ENCODE measurements at regions of chr2 and their contacts with region 1.

Region 1: DNA sequence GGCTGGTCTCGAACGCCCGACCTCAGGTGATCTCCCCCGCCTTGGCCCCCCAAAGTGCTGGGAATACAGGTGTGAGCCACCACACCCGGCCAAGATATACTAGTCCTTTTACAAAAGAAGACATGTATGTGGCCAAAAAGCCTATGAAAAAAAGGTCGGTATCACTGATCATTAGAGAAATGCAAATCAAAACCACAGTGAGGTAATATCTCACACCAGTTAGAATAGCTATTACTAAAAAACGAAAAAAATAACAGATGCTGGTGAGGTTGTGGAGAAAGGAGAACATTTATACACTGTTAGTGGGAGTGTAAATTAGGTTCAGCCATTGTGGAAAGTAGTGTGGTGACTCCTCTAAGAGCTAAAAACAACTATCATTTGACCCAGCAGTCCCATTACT is 26.4 kb downstream of the KLHL23 start:
- DNase-seq: no peak
- ATAC-seq: no peak
- H3K4me3 ChIP-seq: no peak overlapping the region
- H3K4me3 Mint-ChIP-seq: no peak overlapping the region
- H3K27ac ChIP-seq: no peak overlapping the region
- H3K27ac Mint-ChIP-seq: no peak overlapping the region
- H3K4me1 ChIP-seq: no peaks in the 10 kb centered on the region
- H3K4me1 Mint-ChIP-seq: peaks cover 7% of the 10 kb centered on the region
- H3K27me3 ChIP-seq: no peaks in the 10 kb centered on the region
- H3K27me3 Mint-ChIP-seq: no peaks in the 10 kb centered on the region
- CTCF ChIP-seq: no peak

Region 2: DNA sequence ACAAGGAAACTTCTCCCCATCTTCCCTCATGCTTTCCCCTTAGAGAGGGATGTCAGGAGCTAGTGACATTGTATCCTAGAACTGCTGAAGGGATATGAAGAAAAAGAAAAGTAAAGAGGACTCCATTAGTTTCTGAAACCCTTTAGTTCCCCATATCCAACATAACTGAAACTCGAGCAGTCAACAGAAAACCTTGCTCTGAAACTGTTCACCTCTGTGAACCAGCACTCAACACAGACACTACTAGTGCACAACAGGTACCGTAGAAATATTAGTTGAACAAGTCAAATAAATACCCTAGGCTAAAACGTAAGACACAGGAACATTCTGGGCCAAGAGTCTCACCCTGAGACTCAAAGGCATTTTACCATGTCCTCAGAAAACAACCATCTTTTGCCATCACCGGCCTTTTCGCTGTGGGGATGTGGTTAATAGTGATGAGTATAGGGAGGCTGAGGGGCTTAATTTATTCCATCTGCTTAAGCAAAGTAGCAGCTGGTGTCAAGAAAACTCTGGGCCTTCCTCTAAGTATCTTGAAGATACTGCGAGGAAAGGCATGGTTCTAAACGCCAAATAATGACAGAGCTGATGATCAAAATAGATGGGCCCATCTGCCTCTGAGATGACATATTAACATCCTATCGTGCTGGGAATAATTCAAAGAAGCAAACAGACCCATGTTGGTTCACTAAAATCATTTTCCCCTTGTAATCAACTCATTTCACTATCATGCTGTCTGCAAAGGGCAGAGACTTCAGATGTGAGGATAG is 1669.4 kb before region 1 on chr2:
- CTCF ChIA-PET with region 1: no interaction called
- POLR2A ChIA-PET with region 1: no interaction called
- intact Hi-C with region 1: loop called in 1 of 2 experiments (anchors 10 kb)
- DNase-seq: no peak
- ATAC-seq: no peak
- H3K4me3 ChIP-seq: no peak overlapping the region
- H3K4me3 Mint-ChIP-seq: no peak overlapping the region
- H3K27ac ChIP-seq: no peak overlapping the region
- H3K27ac Mint-ChIP-seq: no peak overlapping the region
- H3K4me1 ChIP-seq: peaks cover 12% of the 10 kb centered on the region
- H3K4me1 Mint-ChIP-seq: peaks cover 31% of the 10 kb centered on the region
- H3K27me3 ChIP-seq: no peaks in the 10 kb centered on the region
- H3K27me3 Mint-ChIP-seq: no peaks in the 10 kb centered on the region
- CTCF ChIP-seq: no peak

Region 3: GRCh38 chr2:168816369-168816768 is 943.6 kb before region 1 on chr2:
- CTCF ChIA-PET with region 1: no interaction called
- POLR2A ChIA-PET with region 1: no interaction called
- intact Hi-C with region 1: no loop called
- DNase-seq: no peak
- ATAC-seq: no peak
- H3K4me3 ChIP-seq: no peak overlapping the region
- H3K4me3 Mint-ChIP-seq: no peak overlapping the region
- H3K27ac ChIP-seq: no peak overlapping the region
- H3K27ac Mint-ChIP-seq: no peak overlapping the region
- H3K4me1 ChIP-seq: no peaks in the 10 kb centered on the region
- H3K4me1 Mint-ChIP-seq: no peaks in the 10 kb centered on the region
- H3K27me3 ChIP-seq: no peaks in the 10 kb centered on the region
- H3K27me3 Mint-ChIP-seq: no peaks in the 10 kb centered on the region
- CTCF ChIP-seq: no peak

Region 4: DNA sequence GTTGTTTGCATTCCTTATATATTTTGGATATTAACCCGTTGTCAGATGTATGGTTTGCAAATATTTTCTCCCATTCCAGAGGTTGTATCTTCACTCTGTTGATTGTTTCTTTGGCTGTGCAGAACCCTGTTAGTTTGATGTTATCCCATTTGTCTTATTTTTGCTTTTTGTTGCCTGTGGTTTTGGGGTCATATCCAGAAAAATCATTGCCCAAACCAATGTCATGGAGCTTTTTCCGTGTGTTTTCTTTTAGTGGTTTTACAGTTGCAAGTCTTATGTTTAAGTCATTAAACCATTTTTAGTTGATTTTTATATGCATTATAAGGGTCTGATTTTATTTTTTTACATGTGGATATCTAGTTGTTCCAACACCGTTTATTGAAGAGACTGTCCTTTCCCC is 140.0 kb before region 1 on chr2:
- CTCF ChIA-PET with region 1: no interaction called
- POLR2A ChIA-PET with region 1: no interaction called
- intact Hi-C with region 1: no loop called
- DNase-seq: no peak
- ATAC-seq: no peak
- H3K4me3 ChIP-seq: no peak overlapping the region
- H3K4me3 Mint-ChIP-seq: no peak overlapping the region
- H3K27ac ChIP-seq: no peak overlapping the region
- H3K27ac Mint-ChIP-seq: no peak overlapping the region
- H3K4me1 ChIP-seq: no peaks in the 10 kb centered on the region
- H3K4me1 Mint-ChIP-seq: peaks cover 42% of the 10 kb centered on the region
- H3K27me3 ChIP-seq: no peaks in the 10 kb centered on the region
- H3K27me3 Mint-ChIP-seq: no peaks in the 10 kb centered on the region
- CTCF ChIP-seq: no peak

Region 5: DNA sequence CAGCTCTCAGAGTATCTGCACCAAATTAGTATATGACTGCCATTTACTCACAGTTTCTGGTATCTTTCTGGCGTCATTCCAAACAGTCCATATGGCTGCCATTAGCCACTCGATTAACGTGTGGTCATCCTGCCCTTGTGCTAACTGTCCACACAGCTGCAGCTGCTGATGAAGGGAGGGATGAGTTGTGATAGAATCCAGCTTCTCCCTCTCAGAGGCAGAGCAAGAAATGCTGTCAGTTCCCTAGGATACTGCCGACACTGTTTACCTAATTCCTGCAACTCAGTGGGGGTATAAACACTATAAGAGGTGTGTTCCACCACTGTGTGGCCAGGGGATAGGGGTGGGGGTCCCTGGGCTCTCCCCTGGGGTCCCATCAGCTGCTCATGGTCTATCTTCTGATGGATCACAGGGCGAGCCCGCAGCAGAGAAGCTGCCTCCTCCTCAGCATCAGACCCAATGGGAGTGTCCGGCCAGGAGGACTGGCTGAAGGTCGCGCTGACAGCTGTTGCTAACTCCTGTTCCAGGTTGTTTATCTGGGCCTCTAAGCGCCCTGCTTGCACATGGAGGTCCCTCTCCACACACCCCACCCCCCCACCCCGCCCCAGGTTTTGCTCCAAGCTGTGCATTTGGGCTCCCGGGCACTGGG is 43.6 kb before region 1 on chr2:
- CTCF ChIA-PET with region 1: no interaction called
- POLR2A ChIA-PET with region 1: no interaction called
- intact Hi-C with region 1: loop called in 1 of 2 experiments (anchors 5 kb)
- DNase-seq: no peak
- ATAC-seq: no peak
- H3K4me3 ChIP-seq: no peak overlapping the region
- H3K4me3 Mint-ChIP-seq: no peak overlapping the region
- H3K27ac ChIP-seq: no peak overlapping the region
- H3K27ac Mint-ChIP-seq: no peak overlapping the region
- H3K4me1 ChIP-seq: no peaks in the 10 kb centered on the region
- H3K4me1 Mint-ChIP-seq: no peaks in the 10 kb centered on the region
- H3K27me3 ChIP-seq: no peaks in the 10 kb centered on the region
- H3K27me3 Mint-ChIP-seq: no peaks in the 10 kb centered on the region
- CTCF ChIP-seq: no peak